Breast epithelium (tissue), 4 donors: ENCODE measurements at regions of chr2 and their contacts with region 1.

Region 1: DNA sequence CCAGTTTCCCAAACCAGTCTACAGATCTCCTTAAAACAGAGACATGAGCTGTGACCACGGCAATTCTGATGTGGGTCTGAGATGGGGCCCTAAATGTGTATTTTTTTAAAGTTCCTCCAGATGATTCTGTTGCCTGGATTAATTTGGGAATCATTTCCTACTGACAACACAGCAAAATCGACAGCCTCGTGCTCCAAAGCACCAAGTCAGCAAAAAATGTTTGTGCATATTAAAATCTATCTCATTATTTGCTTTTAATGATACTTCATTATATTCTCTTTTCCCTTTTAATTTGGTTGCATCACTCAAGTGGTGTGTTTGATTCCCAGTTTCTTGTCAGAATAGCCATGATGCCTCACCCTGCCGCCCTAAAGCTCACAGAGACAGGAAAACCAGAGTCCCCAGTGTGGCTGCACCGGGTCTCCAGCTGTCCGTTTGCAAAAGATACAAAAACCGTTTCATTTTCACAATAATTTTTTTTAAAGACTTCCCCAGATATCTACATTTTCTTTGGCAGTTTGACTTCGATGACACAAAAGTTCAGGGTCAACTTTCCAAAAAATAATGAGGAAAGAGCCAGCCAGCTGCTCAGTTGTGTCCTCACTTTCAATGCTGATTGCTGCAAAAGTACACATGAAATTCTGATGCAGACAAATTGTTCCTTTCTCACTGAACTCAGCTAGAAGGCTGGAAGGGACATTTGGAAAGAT is 443.2 kb upstream of the ID2 start:
- DNase-seq: no peak
- H3K4me3 ChIP-seq: no peak overlapping the region
- H3K27ac ChIP-seq: no peak overlapping the region
- H3K4me1 ChIP-seq: no peaks in the 10 kb centered on the region
- H3K27me3 ChIP-seq: no peaks in the 10 kb centered on the region
- CTCF ChIP-seq: no peak
- POLR2A ChIP-seq: no peak

Region 2: DNA sequence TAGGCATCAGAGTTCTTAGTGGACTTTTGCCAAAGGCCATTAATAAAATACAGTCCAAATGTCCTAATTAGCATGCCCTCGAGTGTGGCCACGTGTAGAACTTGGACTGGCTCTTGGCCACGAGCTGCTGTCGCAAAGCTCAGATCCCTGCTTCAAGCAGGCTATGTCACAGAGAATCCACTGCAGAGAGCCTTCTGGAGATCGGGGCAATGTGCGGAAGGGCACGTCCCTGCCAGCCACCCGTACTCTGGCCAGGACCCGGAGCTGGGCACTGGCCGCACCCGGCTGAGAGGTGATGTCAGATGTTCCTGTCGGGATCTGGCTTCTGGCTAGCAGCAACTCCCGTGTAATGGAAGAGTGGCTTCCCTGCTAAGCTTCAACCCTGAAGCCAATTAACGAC is 10.5 kb after region 1 on chr2:
- intact Hi-C with region 1: loop called (anchors 1 kb)
- DNase-seq: no peak
- H3K4me3 ChIP-seq: no peak overlapping the region
- H3K27ac ChIP-seq: peak overlapping the region in 1 of 2 donors; percentile 38
- H3K4me1 ChIP-seq: no peaks in the 10 kb centered on the region
- H3K27me3 ChIP-seq: no peaks in the 10 kb centered on the region
- CTCF ChIP-seq: no peak
- POLR2A ChIP-seq: no peak